WTC11 (cell line): ENCODE measurements at regions of chr20 and their contacts with region 1.

Region 1: DNA sequence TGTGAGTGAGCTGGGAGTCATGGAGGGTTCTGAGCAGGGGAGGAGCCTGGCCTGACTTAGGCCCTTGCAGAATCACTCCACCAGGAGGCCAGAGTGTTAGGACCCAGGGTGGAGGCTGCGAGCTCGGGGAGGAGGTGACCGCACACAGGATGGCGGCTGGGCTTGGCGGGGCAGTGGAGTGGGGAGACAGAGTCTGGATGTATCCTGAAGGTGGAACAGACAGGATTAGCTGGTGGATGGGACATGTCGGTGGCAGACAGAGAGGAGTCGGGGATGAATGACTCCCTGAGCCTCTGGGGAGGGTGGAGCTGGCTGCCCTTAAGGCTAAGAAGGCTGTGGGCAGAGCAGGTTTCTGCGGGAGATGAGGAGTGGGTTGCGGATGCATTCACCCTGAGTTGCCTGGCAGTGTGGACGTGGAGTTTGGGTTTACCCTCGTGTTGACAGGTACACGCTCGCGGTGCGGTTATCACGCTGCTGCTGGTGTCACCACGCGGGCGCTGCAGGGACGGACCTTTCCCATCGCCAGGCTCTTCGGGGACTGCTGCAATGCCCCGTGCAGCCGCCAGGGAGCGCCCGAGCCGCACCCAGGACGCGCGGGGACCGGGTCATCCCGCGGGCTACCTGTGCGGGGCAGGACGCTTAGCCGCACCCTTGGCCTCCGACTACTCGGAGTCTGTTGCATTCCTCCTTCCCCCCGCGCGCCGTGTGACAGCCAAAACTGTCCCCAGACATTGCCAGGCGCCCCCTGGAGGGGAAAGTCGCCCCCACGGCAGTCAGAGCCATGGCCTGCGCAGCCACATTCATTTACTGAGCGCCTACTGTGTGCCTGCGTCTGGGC is 43.0 kb upstream of the PTGIS start:
- DNase-seq: peak; percentile 95
- ATAC-seq: peak; percentile 82
- H3K4me3 Mint-ChIP-seq: peak overlapping the region; percentile 74
- H3K27ac Mint-ChIP-seq: 0 out of 2 replicates have a peak overlapping the region, but pooled peaks have one; percentile 4
- H3K4me1 Mint-ChIP-seq: peaks cover 5% of the 10 kb centered on the region; the same call in 1 of the 2 replicates
- H3K27me3 Mint-ChIP-seq: no peaks in the 10 kb centered on the region
- CTCF ChIP-seq: peak; percentile 100

Region 2: GRCh38 chr20:49323622-49324238 is 287.2 kb before region 1 on chr20:
- CTCF ChIA-PET with region 1: interaction called, 10 read pairs
- POLR2A ChIA-PET with region 1: no interaction called
- DNase-seq: no peak
- ATAC-seq: peak; percentile 25
- H3K4me3 Mint-ChIP-seq: no peak overlapping the region
- H3K27ac Mint-ChIP-seq: no peak overlapping the region
- H3K4me1 Mint-ChIP-seq: peaks cover 32% of the 10 kb centered on the region
- H3K27me3 Mint-ChIP-seq: peaks cover 21% of the 10 kb centered on the region
- CTCF ChIP-seq: no peak

Region 3: DNA sequence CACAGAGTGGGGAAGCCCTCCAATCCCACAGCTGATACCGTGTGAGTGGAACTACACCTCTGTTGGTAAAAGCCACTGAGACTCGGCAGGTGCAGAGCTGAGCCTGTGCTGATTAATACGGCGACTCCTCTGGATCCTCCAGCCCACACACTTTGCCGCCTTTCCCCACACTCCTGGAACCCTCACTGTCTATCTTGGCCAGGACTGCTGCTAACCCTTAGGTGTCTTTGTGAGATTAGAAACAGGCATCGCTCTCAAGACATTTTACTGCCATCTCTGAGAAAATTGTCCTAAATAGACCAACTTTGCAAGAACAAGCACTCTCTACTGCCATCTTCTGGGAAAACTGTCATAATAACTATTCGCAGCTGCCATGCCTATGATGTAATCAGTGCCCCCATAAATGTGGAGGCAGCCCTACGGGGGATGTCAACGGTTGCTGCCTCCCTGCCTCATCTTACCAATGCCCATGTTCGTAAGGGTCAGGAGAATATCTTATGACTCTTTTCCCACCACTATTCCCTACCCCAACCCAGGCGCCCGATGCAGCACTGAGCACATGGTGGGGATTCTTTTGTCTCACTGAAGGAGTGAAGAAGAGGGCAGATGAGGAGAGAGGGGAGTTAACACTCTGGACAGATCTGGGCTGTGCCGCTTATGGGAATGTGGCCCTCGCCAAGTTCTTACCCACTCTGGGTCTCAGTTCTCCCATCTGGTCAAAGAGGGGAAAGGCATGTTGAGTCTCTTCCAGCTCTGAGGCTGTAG is 102.3 kb before region 1 on chr20:
- CTCF ChIA-PET with region 1: interaction called, 10 read pairs
- POLR2A ChIA-PET with region 1: no interaction called
- DNase-seq: no peak
- ATAC-seq: peak; percentile 75
- H3K4me3 Mint-ChIP-seq: no peak overlapping the region
- H3K27ac Mint-ChIP-seq: no peak overlapping the region
- H3K4me1 Mint-ChIP-seq: 0 out of 2 replicates have a peak, but pooled peaks cover under 1% of the 10 kb centered on the region
- H3K27me3 Mint-ChIP-seq: no peaks in the 10 kb centered on the region
- CTCF ChIP-seq: peak; percentile 43

Region 4: GRCh38 chr20:49583669-49584417 is 27.1 kb before region 1 on chr20:
- CTCF ChIA-PET with region 1: interaction called, 12 read pairs
- POLR2A ChIA-PET with region 1: no interaction called
- DNase-seq: no peak
- ATAC-seq: no peak
- H3K4me3 Mint-ChIP-seq: no peak overlapping the region
- H3K27ac Mint-ChIP-seq: no peak overlapping the region
- H3K4me1 Mint-ChIP-seq: peaks cover 14% of the 10 kb centered on the region
- H3K27me3 Mint-ChIP-seq: no peaks in the 10 kb centered on the region
- CTCF ChIP-seq: no peak

Region 5: GRCh38 chr20:49631061-49631788 is 20.3 kb after region 1 on chr20:
- CTCF ChIA-PET with region 1: interaction called, 10 read pairs
- POLR2A ChIA-PET with region 1: no interaction called
- DNase-seq: no peak
- ATAC-seq: peak; percentile 12
- H3K4me3 Mint-ChIP-seq: no peak overlapping the region
- H3K27ac Mint-ChIP-seq: peak overlapping the region; percentile 95
- H3K4me1 Mint-ChIP-seq: peaks cover 56% of the 10 kb centered on the region
- H3K27me3 Mint-ChIP-seq: no peaks in the 10 kb centered on the region
- CTCF ChIP-seq: no peak

Region 6: DNA sequence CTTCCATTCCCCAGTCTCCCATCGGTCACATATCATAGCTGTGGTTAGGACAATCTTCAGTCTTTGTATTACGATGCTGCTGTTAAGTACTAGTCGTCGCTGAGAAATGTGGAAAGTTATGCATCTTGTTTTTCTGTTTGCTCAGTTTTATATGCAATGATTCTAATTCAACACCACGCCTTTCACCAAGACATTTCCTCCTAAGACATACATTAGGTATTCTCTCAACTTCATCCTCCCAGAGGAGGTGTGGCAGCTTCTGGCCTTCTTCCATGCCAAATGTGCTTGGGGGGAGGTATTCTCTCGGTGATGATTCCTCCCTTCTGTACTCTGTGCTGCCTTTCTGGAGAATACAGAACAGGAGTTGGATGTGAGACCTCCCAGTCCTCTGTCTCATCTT is 36.6 kb after region 1 on chr20:
- CTCF ChIA-PET with region 1: no interaction called
- POLR2A ChIA-PET with region 1: no interaction called
- DNase-seq: no peak
- ATAC-seq: no peak
- H3K4me3 Mint-ChIP-seq: no peak overlapping the region
- H3K27ac Mint-ChIP-seq: peak overlapping the region; percentile 52
- H3K4me1 Mint-ChIP-seq: peaks cover 9% of the 10 kb centered on the region
- H3K27me3 Mint-ChIP-seq: no peaks in the 10 kb centered on the region
- CTCF ChIP-seq: no peak

Region 7: DNA sequence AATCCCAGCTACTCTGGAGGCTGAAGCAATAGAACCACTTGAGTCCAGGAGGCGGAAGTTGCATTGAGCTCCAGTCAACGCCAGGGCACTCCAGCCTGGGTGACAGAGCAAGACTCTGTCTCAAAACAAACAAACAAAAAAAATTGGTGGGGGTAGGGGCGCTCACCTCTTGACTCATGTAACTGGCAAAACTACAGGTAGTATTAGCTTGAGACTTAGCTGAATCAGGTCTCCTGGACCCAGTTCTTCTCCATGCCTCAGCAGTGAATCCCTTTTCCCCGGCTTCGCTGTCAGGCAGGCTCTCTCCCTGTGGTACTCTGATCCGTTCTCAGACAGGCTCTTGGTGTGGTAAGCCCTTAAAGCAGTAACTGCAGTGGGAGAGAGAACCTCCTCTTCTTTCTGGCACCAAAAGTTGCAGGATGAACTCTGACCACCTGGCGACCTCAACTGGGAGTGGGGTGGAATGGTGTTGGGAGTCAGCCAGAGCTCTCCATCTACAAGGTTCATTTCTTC is 214.7 kb after region 1 on chr20:
- CTCF ChIA-PET with region 1: interaction called, 10 read pairs
- POLR2A ChIA-PET with region 1: no interaction called
- DNase-seq: no peak
- ATAC-seq: peak; percentile 73
- H3K4me3 Mint-ChIP-seq: no peak overlapping the region
- H3K27ac Mint-ChIP-seq: peak overlapping the region; percentile 80; the same call in 1 of the 2 replicates
- H3K4me1 Mint-ChIP-seq: no peaks in the 10 kb centered on the region
- H3K27me3 Mint-ChIP-seq: no peaks in the 10 kb centered on the region
- CTCF ChIP-seq: no peak

Region 8: DNA sequence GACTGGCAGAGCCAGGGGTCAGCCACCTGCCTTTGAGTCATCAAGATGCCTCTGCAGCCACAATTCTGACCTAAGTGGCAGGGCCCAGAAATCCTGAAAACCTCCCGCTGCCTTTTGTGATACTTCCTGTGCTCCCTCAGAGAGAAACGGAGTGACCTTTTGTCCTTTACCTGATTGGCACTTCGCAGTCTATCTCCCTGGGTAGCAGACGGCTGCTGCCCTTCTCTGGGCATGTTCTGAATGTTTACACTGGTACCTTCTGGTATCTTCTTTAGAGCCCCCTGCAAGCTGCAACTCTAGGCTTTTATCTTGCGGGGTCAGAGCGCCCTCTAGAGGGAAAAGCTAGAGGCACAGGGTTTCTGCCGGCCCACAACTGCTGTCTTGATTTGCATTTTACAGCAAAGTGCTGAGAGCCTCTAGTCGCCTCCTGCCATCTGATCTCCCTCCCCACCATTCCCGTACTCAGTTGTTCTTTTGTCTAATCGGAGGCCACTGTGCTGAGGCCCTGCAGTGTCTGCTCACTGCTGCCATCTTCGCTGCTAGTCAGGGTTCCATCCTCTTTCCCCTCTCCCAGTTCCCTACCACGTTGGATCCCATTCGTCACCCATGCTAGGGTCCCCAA is 277.5 kb after region 1 on chr20:
- CTCF ChIA-PET with region 1: interaction called, 110 read pairs
- POLR2A ChIA-PET with region 1: interaction called, 3 read pairs
- DNase-seq: peak; percentile 89
- ATAC-seq: peak; percentile 83
- H3K4me3 Mint-ChIP-seq: no peak overlapping the region
- H3K27ac Mint-ChIP-seq: peak overlapping the region; percentile 90
- H3K4me1 Mint-ChIP-seq: peaks cover 37% of the 10 kb centered on the region
- H3K27me3 Mint-ChIP-seq: no peaks in the 10 kb centered on the region
- CTCF ChIP-seq: peak; percentile 84